ENCODE measurements at regions of chr9 and their contacts with region 1.

Region 1: DNA sequence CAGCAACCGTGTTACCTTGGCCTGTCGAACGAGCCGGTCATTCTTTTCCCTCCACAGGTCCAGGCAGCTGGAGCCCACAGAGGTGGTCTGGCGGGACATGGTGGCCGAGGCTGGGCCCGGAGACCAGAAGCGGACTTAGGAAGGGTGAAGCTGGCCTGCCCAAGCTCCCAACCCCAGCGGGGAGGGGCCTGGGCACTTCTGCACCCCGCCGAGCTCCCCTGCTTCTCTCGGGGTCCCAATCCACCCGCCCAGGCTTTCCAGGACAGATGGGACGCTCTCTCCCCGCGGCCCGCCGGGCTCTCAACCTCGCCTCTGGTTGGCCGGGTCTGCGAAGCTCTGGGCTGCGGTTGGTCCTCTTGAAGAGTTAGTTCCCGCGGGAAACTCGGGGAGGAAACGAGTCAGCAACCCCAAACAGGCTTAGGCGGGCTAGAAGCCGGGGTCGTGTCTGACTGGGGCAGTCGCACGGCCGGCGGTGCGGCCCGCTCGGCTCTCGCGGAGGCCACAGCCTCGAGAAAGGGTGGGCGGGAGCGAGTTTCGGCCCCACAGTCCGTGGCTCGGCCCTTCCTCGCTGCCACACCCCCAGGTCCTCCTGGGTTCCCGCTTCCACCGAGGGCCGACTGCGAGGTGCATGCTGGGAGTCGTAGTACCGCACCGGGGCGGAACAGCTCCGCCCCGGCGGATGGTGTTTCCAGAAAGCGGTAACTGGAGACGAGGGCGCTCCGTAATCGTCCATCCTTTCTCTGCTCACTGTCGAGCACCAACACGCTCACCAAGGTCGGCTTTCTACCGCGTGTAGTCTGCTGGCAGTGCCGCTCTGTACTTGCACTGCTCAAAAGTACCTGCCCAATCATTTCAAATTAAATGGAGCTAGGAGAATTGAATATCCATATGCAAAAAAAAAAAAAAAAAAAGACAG is at the start of gene FANCG:
- DNase-seq: peak; percentile 96
- H3K4me3 ChIP-seq: peak within 1 kb of the TSS; percentile 65 to 88 (median 74)
- H3K27ac ChIP-seq: peak within 1 kb of the TSS; percentile 60 to 84 (median 78)
- H3K4me1 ChIP-seq: peaks cover 13 to 28% (median 22%) of the 10 kb centered on the region in 4 donors
- H3K27me3 ChIP-seq: no peaks in the 10 kb centered on the region
- CTCF ChIP-seq: peak in 1 of 3 experiments; percentile 23
- EP300 ChIP-seq: no peak
- POLR2A ChIP-seq: peak; percentile 27
- total RNA-seq, gene FANCG: 2.2 to 9.4 (median 4.3) TPM

Region 2: DNA sequence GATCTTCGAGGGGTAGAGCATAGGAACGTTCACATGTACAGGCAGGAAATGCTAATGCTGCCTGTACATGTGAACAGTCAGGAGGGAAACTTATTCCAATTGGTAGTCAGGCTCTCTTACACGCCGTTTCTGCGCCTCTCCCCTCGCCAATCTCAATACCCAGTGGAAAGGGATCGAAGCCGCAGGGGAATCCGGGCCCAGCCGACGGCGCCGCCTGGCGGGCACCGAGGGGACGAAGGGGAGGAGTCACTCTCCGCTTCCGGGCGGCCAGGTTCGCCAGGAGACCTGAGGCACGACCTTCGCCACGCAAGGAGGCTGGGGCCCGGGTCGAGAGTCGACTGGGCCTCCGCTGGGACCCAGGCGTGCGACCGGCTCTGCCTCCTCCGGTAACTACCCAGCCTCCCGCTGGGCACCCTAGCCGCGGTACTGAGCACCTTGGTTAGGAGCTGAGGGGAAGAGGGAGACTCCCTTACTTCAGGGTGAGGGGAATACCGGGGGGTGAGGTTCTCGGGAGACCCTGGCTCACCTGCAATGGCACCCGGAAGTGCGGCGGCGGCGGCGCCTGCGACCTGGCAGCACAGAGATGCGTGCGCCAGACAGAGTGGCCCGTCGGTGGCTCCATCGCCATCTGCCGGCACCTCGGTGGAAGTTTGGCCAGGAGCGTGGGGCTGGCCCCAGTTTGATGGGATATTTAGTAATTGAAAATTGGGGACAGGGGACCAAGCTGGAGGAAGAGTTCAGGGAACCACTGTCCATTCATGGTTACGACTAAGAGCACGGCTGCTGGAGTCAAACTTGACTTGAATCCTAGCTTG is 16.6 kb after region 1 on chr9 and contains the start of gene PIGO:
- intact Hi-C with region 1: loop called (anchors 2 kb)
- DNase-seq: peak; percentile 97
- H3K4me3 ChIP-seq: peak within 1 kb of the TSS; percentile 72 to 99 (median 82)
- H3K27ac ChIP-seq: peak within 1 kb of the TSS; percentile 92 to 98 (median 95)
- H3K4me1 ChIP-seq: peaks cover 11 to 25% (median 20%) of the 10 kb centered on the region in 4 donors
- H3K27me3 ChIP-seq: no peaks in the 10 kb centered on the region
- CTCF ChIP-seq: peak; percentile 59 to 72 (median 72)
- EP300 ChIP-seq: no peak
- POLR2A ChIP-seq: peak; percentile 34
- total RNA-seq, gene PIGO: 9.1 to 12.5 (median 10.1) TPM